Posterior cingulate gyrus (tissue), 11 donors: ENCODE measurements at regions of chr12 and their contacts with region 1.

Region 1: GRCh38 chr12:47715393-47715876 is 9.6 kb upstream of the RPAP3 start:
- DNase-seq: peak in 9 of 10 donors; percentile 62 to 96 (median 87)

Region 2: DNA sequence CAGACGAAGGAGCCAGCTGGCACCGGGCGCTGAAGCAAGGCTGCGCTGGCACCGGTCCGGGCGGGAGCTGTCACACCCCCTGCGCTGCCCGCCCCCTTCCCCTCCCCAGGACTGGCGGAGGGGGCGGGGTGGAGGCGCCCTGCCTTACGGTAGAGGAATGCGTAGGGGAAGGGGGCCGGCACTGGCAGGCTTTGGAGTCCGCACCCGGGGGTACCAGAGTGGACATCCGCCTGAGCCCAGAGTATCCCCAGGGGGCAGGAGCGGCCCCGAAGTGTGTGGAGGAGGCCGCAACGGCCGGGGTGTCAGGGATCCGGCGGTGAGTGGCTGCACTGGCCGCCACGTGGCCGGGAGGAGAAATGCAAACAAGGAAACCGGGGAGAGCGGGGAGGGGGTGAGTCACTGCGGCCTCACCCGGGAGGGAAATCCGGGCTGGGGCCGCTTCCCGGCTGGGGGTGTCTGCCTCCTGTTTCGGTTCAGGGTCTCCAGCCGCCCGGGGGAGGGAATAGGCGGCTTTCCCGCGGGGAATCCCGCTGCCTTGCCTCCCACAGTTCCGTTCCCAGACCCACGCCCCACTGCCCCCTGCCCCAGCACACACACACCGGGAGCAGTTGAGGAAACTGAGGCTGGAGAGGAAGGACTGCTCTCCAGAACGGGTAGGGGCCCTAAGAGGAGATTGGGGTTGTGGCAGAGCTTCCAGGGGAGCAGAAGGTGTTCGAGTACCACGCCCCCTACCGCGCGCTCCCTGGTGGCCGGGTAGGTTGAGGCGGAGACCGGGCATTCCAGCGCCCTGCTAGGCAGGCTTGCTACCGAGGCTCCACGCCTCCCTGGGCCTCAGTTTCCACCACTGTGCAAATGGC is 43.6 kb after region 1 on chr12 and contains the start of gene RAPGEF3:
- intact Hi-C with region 1: loop called (anchors 2 kb)
- DNase-seq: peak; percentile 78 to 98 (median 85)

Region 3: DNA sequence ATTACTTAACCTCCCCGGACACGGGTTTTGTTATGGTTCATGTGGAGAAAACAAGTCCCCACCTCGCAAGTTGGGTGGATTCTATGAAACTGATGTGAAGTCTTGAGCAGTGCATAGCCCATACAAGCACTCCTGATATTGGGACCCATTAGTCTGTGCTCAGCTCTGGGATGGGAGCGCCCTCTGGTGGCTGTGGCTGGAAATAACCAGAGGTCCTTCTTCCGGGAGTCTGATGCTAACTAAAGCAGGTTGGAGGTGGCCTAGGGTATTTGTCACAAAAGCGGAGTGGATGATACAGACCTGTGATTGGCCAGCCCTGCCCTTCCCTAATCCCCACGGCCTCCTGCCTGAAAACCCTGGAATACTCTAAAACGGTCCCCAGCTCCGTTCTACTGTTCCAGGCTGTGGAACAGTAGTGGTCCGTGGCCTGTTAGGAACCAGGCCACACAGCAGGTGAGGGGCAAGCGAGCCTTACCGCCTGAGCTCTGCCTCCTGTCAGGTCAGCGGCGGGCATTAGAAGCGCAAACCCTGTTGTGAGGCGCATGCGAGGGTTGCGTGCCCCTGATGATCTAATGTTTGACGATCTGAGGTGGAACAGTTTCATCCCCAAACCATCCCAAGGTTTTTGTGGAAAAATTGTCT is 64.0 kb after region 1 on chr12:
- intact Hi-C with region 1: loop called (anchors 1 kb)
- DNase-seq: peak; percentile 88 to 99 (median 94)

Region 4: GRCh38 chr12:47837190-47838171 is 122.0 kb after region 1 on chr12:
- intact Hi-C with region 1: loop called (anchors 1 kb)
- DNase-seq: peak in 7 of 10 donors; percentile 58 to 93 (median 71)

Region 5: DNA sequence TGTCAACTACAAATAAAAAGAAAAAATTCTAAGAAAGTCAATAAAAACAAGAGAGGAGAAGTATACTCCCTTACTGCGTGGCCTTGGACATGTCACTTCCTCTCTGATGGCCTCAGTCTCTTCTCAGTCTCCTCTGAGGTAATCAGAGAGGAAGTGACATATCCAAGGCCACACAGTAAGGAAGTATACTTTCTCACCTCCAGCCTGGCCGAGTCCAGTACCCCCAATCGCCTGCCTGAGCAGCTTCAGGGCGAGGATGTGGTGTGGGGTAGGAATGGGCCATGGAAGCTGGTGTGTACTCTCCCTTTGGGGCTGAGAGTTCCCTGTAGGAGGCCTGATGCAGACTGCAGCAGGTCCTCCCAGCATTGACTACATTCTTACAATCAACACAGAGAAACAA is 173.6 kb after region 1 on chr12:
- intact Hi-C with region 1: no loop called
- DNase-seq: no peak

Region 6: DNA sequence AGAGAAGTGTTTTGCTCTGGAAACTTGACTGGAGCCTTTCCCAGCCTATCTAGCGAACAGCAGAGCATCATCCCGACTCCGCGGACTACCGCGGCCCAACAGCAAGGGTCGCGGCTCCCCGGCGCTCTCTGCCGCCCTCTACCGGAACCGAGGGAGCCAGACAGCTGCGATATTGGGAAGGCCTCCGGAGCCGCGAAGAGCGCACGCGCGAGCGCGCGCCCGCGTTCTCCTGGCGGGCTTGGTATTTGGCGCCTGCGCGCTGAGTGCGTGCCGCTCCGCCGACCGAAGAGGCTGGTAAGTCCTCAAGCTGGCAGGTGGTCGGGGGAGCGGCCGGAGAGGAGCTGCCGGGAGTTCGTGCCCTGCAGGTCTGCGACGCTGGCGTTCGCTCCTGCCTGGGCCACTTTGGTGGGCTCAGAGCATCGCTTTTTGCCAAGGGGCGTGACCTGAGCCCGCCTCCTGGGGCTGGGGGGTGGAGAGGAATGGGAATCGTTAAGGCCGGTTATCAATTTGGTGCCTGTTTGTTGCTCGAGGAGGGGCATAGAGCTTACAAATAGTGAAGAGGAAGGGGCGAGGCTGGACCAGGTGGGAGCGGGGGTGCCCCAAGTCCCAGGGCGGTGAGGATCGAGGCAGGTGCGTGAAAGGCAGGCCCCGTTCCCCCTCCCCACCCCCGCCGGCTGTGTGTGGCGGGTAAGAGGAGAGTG is 248.1 kb after region 1 on chr12 and contains the start of gene TMEM106C:
- intact Hi-C with region 1: loop called (anchors 5 kb)
- DNase-seq: peak; percentile 81 to 98 (median 89)